Ascending aorta (tissue), 2 donors: ENCODE measurements at regions of chr1 and their contacts with region 1.

Region 1: GRCh38 chr1:150363426-150364230 is at the start of gene RPRD2:
- DNase-seq: peak; percentile 99 to 100
- H3K4me3 ChIP-seq: peak within 1 kb of the TSS; percentile 55 to 80
- H3K27ac ChIP-seq: peak within 1 kb of the TSS; percentile 93 to 94
- H3K4me1 ChIP-seq: peaks cover 0 to 2% of the 10 kb centered on the region in 2 donors
- H3K27me3 ChIP-seq: no peaks in the 10 kb centered on the region
- CTCF ChIP-seq: no peak
- total RNA-seq, gene RPRD2: 13.7 TPM

Region 2: GRCh38 chr1:150293433-150294168 is 70.0 kb before region 1 on chr1 and contains the start of gene MRPS21:
- intact Hi-C with region 1: loop called (anchors 1 kb)
- DNase-seq: peak; percentile 51 to 95
- H3K4me3 ChIP-seq: peak within 1 kb of the TSS; percentile 62 to 88
- H3K27ac ChIP-seq: peak within 1 kb of the TSS; percentile 78 to 85
- H3K4me1 ChIP-seq: peaks cover 3 to 8% of the 10 kb centered on the region in 2 donors
- H3K27me3 ChIP-seq: no peaks in the 10 kb centered on the region
- CTCF ChIP-seq: no peak
- total RNA-seq, gene MRPS21: 17.1 TPM

Region 3: GRCh38 chr1:150537732-150538684 is 174.4 kb after region 1 on chr1:
- intact Hi-C with region 1: loop called (anchors 10 kb)
- DNase-seq: peak in 1 of 2 donors; percentile 90
- H3K4me3 ChIP-seq: no peak overlapping the region
- H3K27ac ChIP-seq: peak overlapping the region; percentile 86 to 92
- H3K4me1 ChIP-seq: peaks cover 20 to 26% of the 10 kb centered on the region in 2 donors
- H3K27me3 ChIP-seq: no peaks in the 10 kb centered on the region
- CTCF ChIP-seq: no peak